CD8-positive, alpha-beta T cell (primary cell): ENCODE measurements at regions of chr5 and their contacts with region 1.

Region 1: GRCh38 chr5:1140171-1140817 is 28.4 kb upstream of the SLC12A7 start:
- DNase-seq: peak; percentile 55 to 92 (median 79)
- ATAC-seq: peak; percentile 94
- H3K4me3 ChIP-seq: no peak overlapping the region
- H3K4me3 Mint-ChIP-seq: no peak overlapping the region
- H3K27ac ChIP-seq: no peak overlapping the region
- H3K27ac Mint-ChIP-seq: no peak overlapping the region
- H3K4me1 ChIP-seq: peaks cover 8% of the 10 kb centered on the region
- H3K4me1 Mint-ChIP-seq: peaks cover 4% of the 10 kb centered on the region
- H3K27me3 ChIP-seq: no peaks in the 10 kb centered on the region
- H3K27me3 Mint-ChIP-seq: peaks cover 3% of the 10 kb centered on the region
- CTCF ChIP-seq: peak; percentile 79

Region 2: DNA sequence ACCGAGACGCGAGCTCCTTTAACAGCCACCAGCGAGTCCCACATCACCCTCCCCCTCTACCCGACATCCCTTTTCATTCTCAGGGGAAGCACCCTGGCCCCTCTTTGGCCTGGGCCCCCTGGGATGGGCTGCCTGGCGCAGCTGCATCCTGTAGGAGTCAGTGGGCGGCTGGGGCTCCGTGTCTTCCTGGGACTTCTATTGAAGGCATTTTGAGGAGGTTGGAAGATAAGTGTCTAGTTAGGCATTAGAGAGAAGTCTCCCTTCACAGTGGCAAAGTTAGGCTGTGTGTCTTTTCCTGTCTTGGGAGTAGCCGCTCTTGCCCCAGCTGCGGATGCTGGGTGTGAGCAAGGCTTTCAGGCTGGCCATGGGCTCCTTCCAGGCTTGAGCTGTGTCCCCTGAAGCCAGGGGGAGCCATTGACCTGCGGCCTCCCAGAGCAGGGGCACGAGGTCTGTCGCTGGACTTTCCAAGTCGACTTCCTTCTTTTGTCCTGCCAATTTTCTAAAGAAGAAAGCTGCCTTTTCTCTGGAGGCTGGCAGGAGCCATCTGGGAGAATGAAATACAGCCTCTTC is 150.2 kb before region 1 on chr5:
- CTCF ChIA-PET with region 1: interaction called, 9 read pairs
- POLR2A ChIA-PET with region 1: no interaction called
- intact Hi-C with region 1: loop called in 1 of 2 experiments (anchors 1 kb)
- DNase-seq: no peak
- ATAC-seq: no peak
- H3K4me3 ChIP-seq: no peak overlapping the region
- H3K4me3 Mint-ChIP-seq: no peak overlapping the region
- H3K27ac ChIP-seq: no peak overlapping the region
- H3K27ac Mint-ChIP-seq: no peak overlapping the region
- H3K4me1 ChIP-seq: no peaks in the 10 kb centered on the region
- H3K4me1 Mint-ChIP-seq: no peaks in the 10 kb centered on the region
- H3K27me3 ChIP-seq: no peaks in the 10 kb centered on the region
- H3K27me3 Mint-ChIP-seq: peaks cover 29% of the 10 kb centered on the region
- CTCF ChIP-seq: no peak

Region 3: DNA sequence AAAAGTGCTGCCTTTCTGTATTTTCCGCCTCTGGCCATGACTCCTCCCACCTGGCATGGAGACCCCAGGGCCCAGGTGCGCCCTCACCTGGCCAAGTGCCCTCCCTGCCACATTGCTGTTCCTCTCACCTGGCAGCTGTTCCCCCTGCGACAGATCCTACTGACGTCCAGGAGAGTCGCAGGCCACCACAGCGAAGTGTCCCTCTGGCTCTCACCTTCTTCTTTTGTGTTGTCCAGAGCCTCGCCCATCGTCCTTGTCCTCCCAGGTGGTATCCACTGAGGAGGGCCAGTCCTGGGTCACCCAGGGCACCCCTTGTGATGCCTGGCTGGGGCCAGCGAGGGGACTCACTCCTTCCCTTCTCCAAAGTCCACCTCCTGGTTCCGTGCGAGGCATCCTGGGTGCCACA is 129.1 kb before region 1 on chr5:
- CTCF ChIA-PET with region 1: interaction called, 18 read pairs
- POLR2A ChIA-PET with region 1: no interaction called
- intact Hi-C with region 1: loop called in 1 of 2 experiments (anchors 2 kb)
- DNase-seq: peak in 6 of 9 experiments; percentile 18 to 62 (median 58)
- ATAC-seq: peak; percentile 65
- H3K4me3 ChIP-seq: no peak overlapping the region
- H3K4me3 Mint-ChIP-seq: peak overlapping the region; percentile 45
- H3K27ac ChIP-seq: no peak overlapping the region
- H3K27ac Mint-ChIP-seq: no peak overlapping the region
- H3K4me1 ChIP-seq: peaks cover 8% of the 10 kb centered on the region
- H3K4me1 Mint-ChIP-seq: peaks cover 8% of the 10 kb centered on the region
- H3K27me3 ChIP-seq: peaks cover 17 to 21% of the 10 kb centered on the region in 2 experiments
- H3K27me3 Mint-ChIP-seq: peaks cover 36% of the 10 kb centered on the region
- CTCF ChIP-seq: peak; percentile 42

Region 4: GRCh38 chr5:1105350-1106265 is 34.7 kb before region 1 on chr5:
- CTCF ChIA-PET with region 1: interaction called, 7 read pairs
- POLR2A ChIA-PET with region 1: interaction called, 3 read pairs
- intact Hi-C with region 1: loop called (anchors 1 to 2 kb)
- DNase-seq: peak in 8 of 9 experiments; percentile 26 to 89 (median 76)
- ATAC-seq: peak; percentile 73
- H3K4me3 ChIP-seq: peak overlapping the region; percentile 41 to 79
- H3K4me3 Mint-ChIP-seq: peak overlapping the region; percentile 78
- H3K27ac ChIP-seq: peak overlapping the region; percentile 31 to 82
- H3K27ac Mint-ChIP-seq: peak overlapping the region; percentile 97
- H3K4me1 ChIP-seq: peaks cover 99% of the 10 kb centered on the region
- H3K4me1 Mint-ChIP-seq: peaks cover 79% of the 10 kb centered on the region
- H3K27me3 ChIP-seq: no peaks in the 10 kb centered on the region
- H3K27me3 Mint-ChIP-seq: no peaks in the 10 kb centered on the region
- CTCF ChIP-seq: no peak

Region 5: DNA sequence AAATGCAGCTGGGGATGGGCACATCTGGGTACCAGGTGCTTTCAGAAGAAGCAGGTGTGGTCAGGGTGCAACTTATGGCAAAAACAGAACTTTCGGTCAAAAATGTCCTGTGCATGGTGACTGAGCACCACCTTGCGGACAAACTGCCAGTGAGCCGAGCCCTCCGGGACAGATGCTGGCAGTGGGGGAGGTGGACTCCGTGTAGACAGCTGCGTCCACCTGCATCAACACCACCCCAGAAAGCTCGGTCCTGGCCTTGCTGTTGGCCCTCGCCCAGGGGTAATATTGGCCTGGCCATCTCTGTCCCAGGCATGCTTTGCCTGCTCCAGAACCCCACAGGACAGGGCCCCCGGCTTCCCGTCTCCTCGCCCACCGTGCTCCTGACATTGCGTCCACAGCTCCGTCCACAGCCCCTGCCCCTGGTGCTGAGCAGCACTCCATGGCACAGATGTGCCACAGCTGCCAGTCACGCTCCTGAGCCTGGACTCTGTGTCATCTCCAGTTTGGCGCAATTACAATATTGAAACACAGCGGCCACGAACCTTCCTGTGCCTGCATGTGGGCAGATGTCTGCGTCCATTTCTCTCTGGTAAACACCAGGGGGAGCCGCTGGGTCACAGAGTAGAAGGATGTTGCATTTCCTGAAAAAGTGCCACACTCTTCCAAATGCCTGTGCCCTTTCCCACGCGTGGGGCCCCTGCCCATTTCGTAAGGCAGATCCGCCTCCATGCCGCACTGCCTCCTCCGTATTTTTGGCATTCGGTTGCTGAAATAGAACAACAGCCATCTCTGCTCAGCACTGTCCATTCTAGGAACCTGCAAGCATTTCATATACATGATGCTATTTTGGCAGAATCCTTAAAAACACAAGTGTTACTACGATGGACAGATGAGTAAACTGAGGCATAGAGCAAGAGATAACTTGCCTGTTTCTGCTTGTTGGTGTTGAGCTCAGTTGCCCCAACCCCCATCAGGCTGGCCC is 27.7 kb after region 1 on chr5:
- CTCF ChIA-PET with region 1: interaction called, 16 read pairs
- POLR2A ChIA-PET with region 1: no interaction called
- intact Hi-C with region 1: no loop called
- DNase-seq: peak; percentile 31 to 83 (median 71)
- ATAC-seq: peak; percentile 86
- H3K4me3 ChIP-seq: peak overlapping the region; percentile 19 to 31
- H3K4me3 Mint-ChIP-seq: peak overlapping the region; percentile 80
- H3K27ac ChIP-seq: no peak overlapping the region
- H3K27ac Mint-ChIP-seq: no peak overlapping the region
- H3K4me1 ChIP-seq: peaks cover 7% of the 10 kb centered on the region
- H3K4me1 Mint-ChIP-seq: peaks cover 16% of the 10 kb centered on the region
- H3K27me3 ChIP-seq: peaks cover 0 to 3% of the 10 kb centered on the region in 2 experiments
- H3K27me3 Mint-ChIP-seq: peaks cover 6% of the 10 kb centered on the region
- CTCF ChIP-seq: peak; percentile 87